Prostate gland (tissue), 2 donors: ENCODE measurements at regions of chr10 and their contacts with region 1.

Region 1: GRCh38 chr10:31490858-31491504 is 172.0 kb downstream of the ZEB1 start:
- DNase-seq: no peak
- H3K4me3 ChIP-seq: no peak overlapping the region
- H3K27ac ChIP-seq: no peak overlapping the region
- H3K4me1 ChIP-seq: no peaks in the 10 kb centered on the region
- H3K27me3 ChIP-seq: no peaks in the 10 kb centered on the region
- CTCF ChIP-seq: peak in 3 of 4 experiments; percentile 34 to 48 (median 41)
- POLR2A ChIP-seq: no peak

Region 2: DNA sequence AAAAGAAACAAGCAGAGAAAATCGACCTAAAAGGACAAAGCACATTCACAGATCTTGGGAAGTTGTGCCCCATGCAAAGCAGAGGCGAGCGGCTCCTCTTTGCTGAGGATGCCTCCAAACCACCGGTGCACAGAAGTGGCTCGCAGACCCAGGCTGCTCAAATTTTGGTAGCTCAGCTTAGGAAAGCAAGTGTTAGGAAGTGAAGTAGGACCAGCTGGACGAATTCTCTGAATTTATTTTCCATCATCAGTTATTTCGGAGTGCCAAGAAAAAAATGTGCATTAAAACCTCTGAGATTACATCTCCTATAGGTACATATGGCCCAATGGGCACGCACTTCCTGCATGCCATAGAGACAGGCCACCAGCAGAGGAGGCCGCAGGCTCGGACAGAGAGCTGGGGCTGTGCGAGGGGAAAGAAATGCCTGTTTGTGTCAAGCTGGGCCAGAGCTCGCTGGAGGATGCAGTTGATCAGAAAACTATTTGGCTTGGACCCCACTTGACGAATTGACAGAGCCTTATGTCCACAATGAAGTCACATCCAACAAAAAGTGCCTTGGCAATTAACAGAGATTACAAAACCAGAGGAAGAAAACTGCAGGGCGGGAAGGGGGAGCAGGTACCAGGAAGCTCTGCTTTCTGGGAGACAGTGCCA is 739.2 kb before region 1 on chr10:
- intact Hi-C with region 1: loop called (anchors 10 kb)
- DNase-seq: peak; percentile 31
- H3K4me3 ChIP-seq: no peak overlapping the region
- H3K27ac ChIP-seq: no peak overlapping the region
- H3K4me1 ChIP-seq: no peaks in the 10 kb centered on the region
- H3K27me3 ChIP-seq: no peaks in the 10 kb centered on the region
- CTCF ChIP-seq: peak in 3 of 4 experiments; percentile 42 to 86 (median 71)
- POLR2A ChIP-seq: no peak